Caco-2 (cell line): ENCODE measurements at regions of chr5 and their contacts with region 1.

Region 1: DNA sequence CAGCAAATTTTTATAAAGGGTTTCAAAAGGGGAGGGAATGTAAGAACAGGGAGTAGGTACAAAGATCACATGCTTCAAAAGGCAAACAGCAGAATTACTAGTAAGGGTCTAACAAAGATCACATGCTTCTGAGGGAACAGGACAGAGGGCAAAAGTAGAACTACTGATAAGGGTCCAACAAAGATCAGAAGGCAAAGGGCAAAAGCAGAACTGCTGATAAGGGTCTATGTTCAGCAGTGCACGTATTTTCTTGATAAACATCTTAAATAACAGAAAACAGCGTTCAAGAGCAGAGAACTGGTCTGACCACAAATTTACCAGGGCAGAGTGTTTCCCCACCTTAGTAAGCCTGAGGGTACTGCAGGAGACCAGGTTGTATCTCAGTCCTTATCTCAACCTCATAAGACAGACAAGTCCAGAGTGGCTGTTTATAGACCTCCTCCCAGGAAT is 469.4 kb upstream of the PIK3R1 start:
- DNase-seq: peak; percentile 83 to 89
- H3K4me3 ChIP-seq: no peak overlapping the region
- H3K4me3 Mint-ChIP-seq: peak overlapping the region; percentile 3
- H3K27ac Mint-ChIP-seq: peak overlapping the region; percentile 92
- H3K4me1 ChIP-seq: peaks cover 39% of the 10 kb centered on the region
- H3K4me1 Mint-ChIP-seq: peaks cover 25% of the 10 kb centered on the region
- H3K27me3 ChIP-seq: no peaks in the 10 kb centered on the region
- H3K27me3 Mint-ChIP-seq: no peaks in the 10 kb centered on the region
- CTCF ChIP-seq: no peak

Region 2: DNA sequence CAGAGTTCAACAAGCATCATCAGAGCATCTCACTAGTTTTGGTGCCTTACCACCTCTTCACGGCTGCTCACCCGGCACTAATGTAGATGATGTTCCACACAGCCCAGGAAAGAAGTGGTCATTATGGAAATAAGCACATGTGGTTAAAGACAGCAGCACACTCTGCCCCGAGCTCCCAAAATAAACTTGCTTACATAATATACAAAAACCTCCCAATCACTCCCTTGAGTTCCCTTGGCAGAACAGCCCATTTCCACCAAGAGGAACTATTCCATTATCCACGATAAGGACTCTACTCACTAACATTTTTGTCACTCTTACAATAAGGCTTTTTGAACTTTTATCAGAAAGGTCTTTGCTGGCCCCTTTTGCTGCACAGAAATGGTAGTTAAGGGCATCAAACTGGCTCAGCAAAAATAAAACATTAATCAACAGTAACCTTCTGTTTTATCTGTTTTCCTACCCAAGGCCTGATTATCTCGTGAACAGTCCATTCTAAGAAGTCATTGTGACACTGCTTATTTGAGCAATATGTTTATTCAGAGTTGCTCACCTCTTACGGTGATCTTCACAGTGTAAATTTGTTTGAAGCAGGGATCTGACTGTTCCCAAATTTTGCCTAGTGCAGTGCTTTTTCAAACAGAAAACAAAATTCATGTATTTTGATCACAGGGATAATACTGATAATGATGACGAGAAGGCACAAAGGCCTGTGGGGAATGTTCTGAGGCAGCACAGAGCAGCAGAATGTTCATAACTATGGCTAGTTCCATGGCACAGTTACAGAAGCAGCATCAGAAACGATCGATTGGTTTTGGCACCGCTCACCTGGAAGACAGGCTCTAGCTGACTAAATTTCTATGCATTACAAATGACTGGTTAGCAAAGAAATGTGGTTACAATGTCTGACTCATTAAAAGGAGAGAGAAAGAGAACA is 69.6 kb after region 1 on chr5:
- CTCF ChIA-PET with region 1: no interaction called
- POLR2A ChIA-PET with region 1: no interaction called
- intact Hi-C with region 1: loop called (anchors 2 kb)
- DNase-seq: peak in 1 of 2 experiments; percentile 18
- H3K4me3 ChIP-seq: no peak overlapping the region
- H3K4me3 Mint-ChIP-seq: no peak overlapping the region
- H3K27ac Mint-ChIP-seq: peak overlapping the region; percentile 63
- H3K4me1 ChIP-seq: peaks cover 26% of the 10 kb centered on the region
- H3K4me1 Mint-ChIP-seq: peaks cover 22% of the 10 kb centered on the region
- H3K27me3 ChIP-seq: no peaks in the 10 kb centered on the region
- H3K27me3 Mint-ChIP-seq: no peaks in the 10 kb centered on the region
- CTCF ChIP-seq: no peak

Region 3: DNA sequence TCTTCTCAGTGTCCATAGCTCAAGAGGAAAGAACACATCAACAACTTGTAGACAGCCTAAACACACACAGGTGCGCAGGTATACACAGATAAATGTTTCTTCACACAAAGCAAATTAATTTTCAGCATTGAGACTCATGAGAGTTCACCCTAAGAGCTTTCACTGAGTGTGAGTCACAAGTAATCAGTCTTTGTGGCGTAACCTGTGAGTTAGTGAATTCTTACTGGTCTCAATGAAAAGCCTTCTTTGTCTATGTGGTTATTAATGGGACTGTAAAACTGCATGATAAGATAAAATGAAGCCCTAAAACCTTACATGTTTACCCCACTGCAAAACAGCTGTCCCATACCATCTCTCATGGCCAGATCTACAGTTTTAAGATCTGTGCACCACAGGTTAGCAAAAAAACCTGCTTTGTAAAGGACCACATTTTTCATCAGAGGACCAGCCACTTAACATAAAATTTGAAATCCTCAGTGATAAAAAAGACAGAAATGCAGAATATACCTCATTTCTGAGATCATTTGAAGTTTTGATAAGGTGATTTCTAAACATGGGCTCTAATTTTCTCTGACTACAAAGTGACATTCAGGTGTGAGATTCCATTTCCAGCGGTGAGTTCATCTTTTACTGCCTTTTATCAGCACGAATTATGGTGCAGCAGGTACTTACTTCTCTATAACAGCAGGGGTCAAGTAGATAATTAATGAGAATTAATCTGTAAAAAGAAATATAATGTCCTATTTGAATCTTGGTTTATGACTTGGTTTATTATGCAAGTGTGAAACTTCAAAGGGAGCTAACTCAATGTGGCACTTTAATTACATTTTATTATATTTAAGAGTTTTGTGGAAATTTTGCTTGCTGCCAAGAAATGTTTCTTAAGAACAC is 133.7 kb after region 1 on chr5:
- CTCF ChIA-PET with region 1: no interaction called
- POLR2A ChIA-PET with region 1: no interaction called
- intact Hi-C with region 1: loop called (anchors 1 kb)
- DNase-seq: peak; percentile 56 to 65
- H3K4me3 ChIP-seq: no peak overlapping the region
- H3K4me3 Mint-ChIP-seq: peak overlapping the region; percentile 33
- H3K27ac Mint-ChIP-seq: peak overlapping the region; percentile 91
- H3K4me1 ChIP-seq: peaks cover 46% of the 10 kb centered on the region
- H3K4me1 Mint-ChIP-seq: peaks cover 40% of the 10 kb centered on the region
- H3K27me3 ChIP-seq: no peaks in the 10 kb centered on the region
- H3K27me3 Mint-ChIP-seq: no peaks in the 10 kb centered on the region
- CTCF ChIP-seq: no peak

Region 4: GRCh38 chr5:67963789-67964519 is 217.8 kb after region 1 on chr5:
- CTCF ChIA-PET with region 1: no interaction called
- POLR2A ChIA-PET with region 1: no interaction called
- intact Hi-C with region 1: no loop called
- DNase-seq: peak in 1 of 2 experiments; percentile 20
- H3K4me3 ChIP-seq: no peak overlapping the region
- H3K4me3 Mint-ChIP-seq: no peak overlapping the region
- H3K27ac Mint-ChIP-seq: peak overlapping the region; percentile 48
- H3K4me1 ChIP-seq: peaks cover 23% of the 10 kb centered on the region
- H3K4me1 Mint-ChIP-seq: peaks cover 26% of the 10 kb centered on the region
- H3K27me3 ChIP-seq: no peaks in the 10 kb centered on the region
- H3K27me3 Mint-ChIP-seq: no peaks in the 10 kb centered on the region
- CTCF ChIP-seq: no peak

Region 5: GRCh38 chr5:68424799-68425537 is 678.8 kb after region 1 on chr5:
- CTCF ChIA-PET with region 1: no interaction called
- POLR2A ChIA-PET with region 1: no interaction called
- intact Hi-C with region 1: no loop called
- DNase-seq: no peak
- H3K4me3 ChIP-seq: no peak overlapping the region
- H3K4me3 Mint-ChIP-seq: no peak overlapping the region
- H3K27ac Mint-ChIP-seq: peak overlapping the region; percentile 59
- H3K4me1 ChIP-seq: peaks cover 11% of the 10 kb centered on the region
- H3K4me1 Mint-ChIP-seq: peaks cover 34% of the 10 kb centered on the region
- H3K27me3 ChIP-seq: no peaks in the 10 kb centered on the region
- H3K27me3 Mint-ChIP-seq: no peaks in the 10 kb centered on the region
- CTCF ChIP-seq: no peak